Right ventricle myocardium inferior (tissue), 1 donor: ENCODE measurements at regions of chr12 and their contacts with region 1.

Region 1: DNA sequence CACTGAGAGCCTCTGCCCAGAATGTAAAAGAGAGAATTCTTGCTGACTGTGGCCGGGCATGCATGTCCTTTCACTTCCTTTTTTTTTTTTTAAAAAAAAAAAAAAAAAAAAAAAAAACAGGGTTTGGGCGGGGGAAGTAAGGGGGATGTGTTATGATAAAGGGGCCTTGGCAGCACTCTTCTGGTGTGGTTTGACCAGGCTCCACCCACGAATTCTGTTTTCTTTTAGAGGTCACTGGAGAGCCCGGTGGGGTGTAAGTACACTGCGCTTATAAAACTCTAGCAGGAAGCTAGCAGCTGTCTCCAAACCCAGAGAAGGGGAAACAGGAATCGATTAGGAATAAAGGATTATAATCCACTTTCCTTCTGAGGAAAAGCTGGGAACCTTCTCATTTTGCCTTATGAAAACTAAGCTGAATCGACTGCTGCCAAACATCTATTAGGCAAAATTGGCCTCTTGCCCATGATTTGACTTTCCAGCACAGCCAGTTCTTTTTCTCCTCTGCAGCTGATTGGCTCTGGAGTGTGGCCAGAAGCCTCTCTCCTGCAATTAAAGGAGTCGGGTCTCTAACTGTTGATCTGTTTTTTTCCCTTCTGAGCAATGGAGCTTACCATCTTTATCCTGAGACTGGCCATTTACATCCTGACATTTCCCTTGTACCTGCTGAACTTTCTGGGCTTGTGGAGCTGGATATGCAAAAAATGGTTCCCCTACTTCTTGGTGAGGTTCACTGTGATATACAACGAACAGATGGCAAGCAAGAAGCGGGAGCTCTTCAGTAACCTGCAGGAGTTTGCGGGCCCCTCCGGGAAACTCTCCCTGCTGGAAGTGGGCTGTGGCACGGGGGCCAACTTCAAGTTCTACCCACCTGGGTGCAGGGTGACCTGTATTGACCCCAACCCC is 27.7 kb upstream of the HIGD1C start:
- DNase-seq: peak; percentile 89
- ATAC-seq: peak; percentile 96

Region 2: GRCh38 chr12:50763639-50764285 is 160.9 kb before region 1 on chr12 and contains the start of gene ATF1:
- intact Hi-C with region 1: loop called (anchors 2 kb)
- DNase-seq: peak; percentile 95
- ATAC-seq: peak; percentile 96
- total RNA-seq, gene ATF1: 29.2 TPM

Region 3: DNA sequence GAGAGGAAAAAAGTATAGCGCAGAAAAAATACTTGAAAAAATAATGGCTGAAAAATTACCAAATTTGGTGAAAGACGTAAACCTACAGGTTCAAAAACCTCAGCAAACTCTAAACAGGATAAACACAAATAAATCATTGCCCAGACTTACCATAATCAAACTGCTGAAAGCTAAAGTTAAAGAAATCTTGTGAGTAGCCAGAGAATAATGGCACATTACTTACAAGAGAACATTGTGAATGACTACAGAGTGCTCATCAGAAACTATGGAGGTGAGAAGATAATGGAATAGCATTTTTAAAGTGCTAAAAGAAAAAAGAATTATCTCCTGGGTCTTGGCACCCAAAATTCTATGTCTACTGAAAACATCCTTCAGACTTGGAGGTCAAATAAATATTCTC is 124.8 kb before region 1 on chr12:
- intact Hi-C with region 1: no loop called
- DNase-seq: no peak
- ATAC-seq: no peak

Region 4: GRCh38 chr12:50825372-50825838 is 99.3 kb before region 1 on chr12:
- intact Hi-C with region 1: loop called (anchors 1 kb)
- DNase-seq: no peak
- ATAC-seq: peak; percentile 75

Region 5: DNA sequence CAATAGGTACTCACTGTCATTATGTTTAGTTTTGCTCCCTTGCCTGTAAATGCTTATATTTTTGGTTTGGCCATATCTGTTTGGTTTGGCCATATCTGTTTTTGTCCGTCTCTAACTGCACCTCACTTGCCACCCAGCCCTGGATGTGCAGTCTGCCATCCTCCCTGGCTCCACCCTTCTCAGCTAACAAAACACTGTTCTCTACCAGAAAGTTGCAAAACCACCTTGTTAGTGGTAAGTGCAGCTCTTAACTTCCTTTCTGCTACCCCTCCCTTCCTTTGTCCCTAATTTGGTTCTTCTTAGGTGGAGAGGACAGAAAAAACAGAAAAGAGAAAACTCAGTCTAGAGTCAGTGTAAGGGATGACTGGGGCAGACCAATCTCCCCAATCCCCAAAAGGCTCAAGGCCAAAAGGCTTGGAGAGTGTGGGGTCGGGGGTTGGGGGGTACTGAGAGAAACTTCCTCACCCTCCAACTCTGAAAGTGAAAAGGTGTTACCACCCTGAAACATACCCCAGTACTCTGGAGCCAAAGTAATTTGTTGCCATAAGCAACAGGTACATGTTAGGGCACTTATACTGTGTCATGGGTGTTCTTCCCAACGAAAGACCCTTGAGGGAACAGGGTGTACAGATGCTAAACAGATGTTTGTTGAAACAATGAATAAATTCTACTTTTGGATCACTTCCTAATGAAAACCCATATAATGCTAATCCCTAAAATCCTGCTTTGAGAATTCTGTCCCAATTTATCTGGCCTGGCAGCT is 394.3 kb after region 1 on chr12:
- intact Hi-C with region 1: no loop called
- DNase-seq: no peak
- ATAC-seq: no peak